ENCODE measurements at regions of chr9 and their contacts with region 1.

Region 1: GRCh38 chr9:104747558-104748358 is at the start of gene NIPSNAP3A:
- DNase-seq: peak; percentile 97
- H3K4me3 Mint-ChIP-seq: peak within 1 kb of the TSS; percentile 93
- H3K27ac Mint-ChIP-seq: peak within 1 kb of the TSS; percentile 96
- H3K4me1 Mint-ChIP-seq: peaks cover 26% of the 10 kb centered on the region
- H3K27me3 Mint-ChIP-seq: no peaks in the 10 kb centered on the region
- total RNA-seq, gene NIPSNAP3A: 9.4 and 10.8 TPM in 2 replicates

Region 2: DNA sequence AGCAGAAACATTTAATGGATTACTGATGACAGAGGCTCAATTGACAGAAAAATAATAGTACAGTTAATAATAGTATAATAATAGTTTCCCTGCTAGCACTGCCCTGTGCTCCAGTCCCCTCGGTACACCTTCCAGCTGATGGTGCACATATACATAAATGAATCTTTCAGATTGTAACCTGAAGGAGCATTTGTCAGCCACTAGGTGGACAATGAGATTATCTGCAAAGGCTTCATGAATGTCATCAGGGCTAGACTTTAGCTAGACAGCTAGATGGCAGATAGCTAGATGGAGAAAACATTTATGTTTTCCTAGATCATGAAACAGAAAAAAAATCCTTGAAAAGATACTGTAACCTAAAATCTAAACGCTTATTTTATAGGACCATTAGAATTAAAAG is 958.1 kb before region 1 on chr9:
- intact Hi-C with region 1: loop called (anchors 10 kb)
- DNase-seq: no peak
- H3K4me3 Mint-ChIP-seq: no peak overlapping the region
- H3K27ac Mint-ChIP-seq: no peak overlapping the region
- H3K4me1 Mint-ChIP-seq: no peaks in the 10 kb centered on the region
- H3K27me3 Mint-ChIP-seq: no peaks in the 10 kb centered on the region

Region 3: DNA sequence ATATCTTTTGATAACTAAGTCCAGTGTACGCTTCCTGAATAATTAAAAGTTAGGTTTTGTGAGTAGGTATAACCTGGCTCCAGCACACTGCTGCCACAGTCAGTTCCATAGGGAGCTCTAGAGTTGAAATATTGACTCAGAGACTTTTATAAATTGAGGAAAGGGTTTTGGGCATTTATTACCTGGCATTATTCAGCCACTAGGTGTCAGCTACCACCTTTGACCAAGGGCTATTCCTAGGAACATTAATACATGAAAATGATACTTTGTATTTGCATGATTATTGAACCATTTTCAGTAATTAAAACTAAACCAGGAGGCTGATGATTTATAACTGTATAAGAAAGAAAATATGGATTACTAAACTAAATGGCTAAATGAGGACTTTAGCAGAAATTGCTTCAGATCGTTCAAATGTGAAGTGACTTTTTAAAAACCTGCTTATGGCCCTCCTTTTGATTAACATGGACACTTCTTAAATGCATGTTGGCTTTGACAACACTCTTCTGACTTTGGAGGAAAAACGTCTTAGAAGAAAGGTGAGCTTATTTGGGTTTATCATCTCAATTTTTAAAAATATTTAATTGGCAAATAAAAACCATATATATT is 570.7 kb before region 1 on chr9:
- intact Hi-C with region 1: loop called (anchors 5 kb)
- DNase-seq: no peak
- H3K4me3 Mint-ChIP-seq: no peak overlapping the region
- H3K27ac Mint-ChIP-seq: no peak overlapping the region
- H3K4me1 Mint-ChIP-seq: no peaks in the 10 kb centered on the region
- H3K27me3 Mint-ChIP-seq: no peaks in the 10 kb centered on the region

Region 4: GRCh38 chr9:104765138-104765537 is 17.4 kb after region 1 on chr9:
- intact Hi-C with region 1: loop called (anchors 1 kb)
- DNase-seq: no peak
- H3K4me3 Mint-ChIP-seq: no peak overlapping the region
- H3K27ac Mint-ChIP-seq: no peak overlapping the region
- H3K4me1 Mint-ChIP-seq: peaks cover 4% of the 10 kb centered on the region
- H3K27me3 Mint-ChIP-seq: peaks cover 4% of the 10 kb centered on the region

Region 5: GRCh38 chr9:104808035-104808614 is 60.4 kb after region 1 on chr9:
- intact Hi-C with region 1: no loop called
- DNase-seq: no peak
- H3K4me3 Mint-ChIP-seq: no peak overlapping the region
- H3K27ac Mint-ChIP-seq: no peak overlapping the region
- H3K4me1 Mint-ChIP-seq: no peaks in the 10 kb centered on the region
- H3K27me3 Mint-ChIP-seq: no peaks in the 10 kb centered on the region

Region 6: DNA sequence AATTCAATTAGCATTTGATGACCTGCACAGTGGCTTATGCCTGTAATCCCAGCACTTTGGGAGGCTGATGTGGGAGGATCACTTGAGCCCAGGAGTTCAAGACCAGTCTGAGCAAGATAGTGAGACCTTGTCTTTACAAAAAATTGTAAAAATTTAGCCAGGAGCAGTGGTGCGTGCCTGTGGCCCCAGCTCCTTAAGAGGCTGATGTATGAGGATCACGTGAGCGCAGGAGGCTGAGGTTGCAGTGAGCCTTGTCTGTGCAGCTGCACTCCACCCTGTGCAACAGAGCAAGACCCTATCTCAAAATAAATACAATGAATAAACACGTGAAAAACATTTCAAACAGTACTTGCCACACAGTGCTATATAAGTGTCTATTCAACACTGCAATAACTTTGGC is 176.0 kb after region 1 on chr9:
- intact Hi-C with region 1: no loop called
- DNase-seq: no peak
- H3K4me3 Mint-ChIP-seq: no peak overlapping the region
- H3K27ac Mint-ChIP-seq: no peak overlapping the region
- H3K4me1 Mint-ChIP-seq: peaks cover 14% of the 10 kb centered on the region
- H3K27me3 Mint-ChIP-seq: peaks cover 28% of the 10 kb centered on the region

Region 7: GRCh38 chr9:104991144-104991953 is 243.6 kb after region 1 on chr9:
- intact Hi-C with region 1: loop called (anchors 10 kb)
- DNase-seq: peak; percentile 93
- H3K4me3 Mint-ChIP-seq: peak overlapping the region; percentile 88
- H3K27ac Mint-ChIP-seq: peak overlapping the region; percentile 82
- H3K4me1 Mint-ChIP-seq: peaks cover 29% of the 10 kb centered on the region
- H3K27me3 Mint-ChIP-seq: peaks cover 46% of the 10 kb centered on the region

Region 8: GRCh38 chr9:105414947-105415661 is 667.3 kb after region 1 on chr9:
- intact Hi-C with region 1: loop called (anchors 10 kb)
- DNase-seq: peak; percentile 87
- H3K4me3 Mint-ChIP-seq: no peak overlapping the region
- H3K27ac Mint-ChIP-seq: no peak overlapping the region
- H3K4me1 Mint-ChIP-seq: peaks cover 11% of the 10 kb centered on the region
- H3K27me3 Mint-ChIP-seq: peaks cover 39% of the 10 kb centered on the region

Measured in activated CD4-positive, alpha-beta T cell treated with anti-CD3 and anti-CD28 coated beads, Interleukin-2, amount 10 ng/mL, durations not matched to agents 24 days and 14 days (primary cell).